ENCODE measurements at regions of chr5 and their contacts with region 1.

Region 1: GRCh38 chr5:56615361-56616153 is 199.8 kb upstream of the MAP3K1 start:
- DNase-seq: no peak
- H3K4me3 ChIP-seq: no peak overlapping the region
- H3K4me3 Mint-ChIP-seq: peak overlapping the region in 7 of 8 donors; percentile 33 to 89 (median 54)
- H3K27ac ChIP-seq: no peak overlapping the region
- H3K27ac Mint-ChIP-seq: peak overlapping the region; percentile 69 to 93 (median 81)
- H3K4me1 ChIP-seq: peaks cover 68% of the 10 kb centered on the region
- H3K4me1 Mint-ChIP-seq: peaks cover 56 to 69% (median 63%) of the 10 kb centered on the region in 4 donors
- H3K27me3 ChIP-seq: no peaks in the 10 kb centered on the region
- H3K27me3 Mint-ChIP-seq: no peaks in the 10 kb centered on the region

Region 2: DNA sequence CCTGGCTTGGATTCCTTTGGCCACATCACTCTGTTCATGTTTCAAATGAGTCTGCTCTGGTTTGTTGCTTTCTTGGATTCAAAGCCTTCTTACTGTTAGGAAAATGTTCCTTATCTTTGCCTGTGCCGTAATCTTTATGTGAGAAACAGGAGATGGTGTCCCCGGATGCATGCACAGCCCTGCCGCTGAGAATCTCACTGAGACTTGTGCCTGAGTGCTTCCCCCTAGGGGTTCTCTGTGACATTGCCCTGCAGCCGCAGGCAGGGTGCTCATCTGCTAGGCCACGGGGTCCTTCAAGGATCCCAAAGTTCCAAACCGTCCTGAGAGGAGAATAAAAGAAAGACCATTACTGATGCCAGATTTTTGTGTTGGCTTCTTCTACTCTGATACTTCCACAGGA is 301.0 kb before region 1 on chr5:
- CTCF ChIA-PET with region 1: no interaction called
- POLR2A ChIA-PET with region 1: no interaction called
- intact Hi-C with region 1: no loop called
- DNase-seq: peak in 2 of 5 donors; percentile 19 to 22
- H3K4me3 ChIP-seq: no peak overlapping the region
- H3K4me3 Mint-ChIP-seq: peak overlapping the region in 2 of 8 donors; percentile 1 to 21
- H3K27ac ChIP-seq: no peak overlapping the region
- H3K27ac Mint-ChIP-seq: peak overlapping the region in 2 of 7 donors; percentile 1 to 66
- H3K4me1 ChIP-seq: peaks cover 22% of the 10 kb centered on the region
- H3K4me1 Mint-ChIP-seq: peaks cover 7 to 14% (median 12%) of the 10 kb centered on the region in 4 donors
- H3K27me3 ChIP-seq: no peaks in the 10 kb centered on the region
- H3K27me3 Mint-ChIP-seq: no peaks in the 10 kb centered on the region

Region 3: DNA sequence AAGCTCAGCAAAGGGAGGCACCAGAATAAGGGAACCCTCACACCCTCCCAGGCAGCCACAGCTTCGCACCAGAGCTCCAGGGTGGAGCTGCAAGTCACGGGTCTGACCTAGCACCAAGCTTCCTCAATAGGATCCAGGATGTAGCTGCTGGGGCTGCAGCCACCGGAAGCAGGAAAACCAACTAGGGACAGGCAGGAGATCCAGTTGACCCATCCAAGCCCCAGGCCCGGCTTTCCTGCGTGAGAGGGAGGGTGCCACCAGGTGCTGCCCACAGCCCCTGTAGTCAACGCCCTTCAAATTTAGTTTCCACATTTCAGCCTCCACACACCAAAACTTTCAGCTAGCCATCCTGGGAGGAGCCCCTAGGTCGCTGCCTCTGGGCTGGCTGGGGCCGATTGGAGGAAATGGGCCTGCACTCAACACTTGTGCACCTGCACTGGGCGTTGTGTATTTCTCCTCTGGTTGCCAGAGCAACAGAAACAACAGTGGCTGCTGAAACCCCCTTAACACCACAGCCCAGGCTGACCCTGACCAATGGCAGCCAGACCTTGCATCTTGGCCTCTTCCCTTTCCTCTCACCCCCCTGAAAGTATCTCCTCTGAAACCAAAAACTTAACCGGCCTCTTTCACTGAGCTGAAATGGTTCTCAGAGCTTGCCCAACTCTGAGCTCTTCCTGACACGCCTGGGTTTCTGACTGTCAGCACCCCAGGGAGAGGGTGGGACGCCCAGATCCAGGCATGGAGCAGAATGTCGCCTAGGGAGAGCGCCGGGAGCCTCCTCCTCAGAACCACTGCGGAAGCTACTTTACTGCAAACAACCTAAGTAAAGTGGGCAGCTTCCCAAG is 26.7 kb before region 1 on chr5:
- CTCF ChIA-PET with region 1: no interaction called
- POLR2A ChIA-PET with region 1: interaction called, 24 read pairs
- intact Hi-C with region 1: no loop called
- DNase-seq: peak; percentile 73 to 88 (median 82)
- H3K4me3 ChIP-seq: no peak overlapping the region
- H3K4me3 Mint-ChIP-seq: peak overlapping the region; percentile 49 to 81 (median 68)
- H3K27ac ChIP-seq: peak overlapping the region; percentile 72
- H3K27ac Mint-ChIP-seq: peak overlapping the region; percentile 91 to 98 (median 95)
- H3K4me1 ChIP-seq: peaks cover 52% of the 10 kb centered on the region
- H3K4me1 Mint-ChIP-seq: peaks cover 52 to 74% (median 61%) of the 10 kb centered on the region in 4 donors
- H3K27me3 ChIP-seq: no peaks in the 10 kb centered on the region
- H3K27me3 Mint-ChIP-seq: no peaks in the 10 kb centered on the region

Measured in CD4-positive, alpha-beta memory T cell (primary cell).